IMR-90 (cell line): ENCODE measurements at regions of chr9 and their contacts with region 1.

Region 1: GRCh38 chr9:31188496-31188895 is 1195.9 kb upstream of the ACO1 start:
- DNase-seq: no peak
- ATAC-seq: no peak
- H3K4me3 ChIP-seq: no peak overlapping the region
- H3K27ac ChIP-seq: no peak overlapping the region
- H3K4me1 ChIP-seq: no peaks in the 10 kb centered on the region
- H3K27me3 ChIP-seq: no peaks in the 10 kb centered on the region
- CTCF ChIP-seq: no peak
- POLR2A ChIP-seq: no peak
- RAD21 ChIP-seq: no peak

Region 2: DNA sequence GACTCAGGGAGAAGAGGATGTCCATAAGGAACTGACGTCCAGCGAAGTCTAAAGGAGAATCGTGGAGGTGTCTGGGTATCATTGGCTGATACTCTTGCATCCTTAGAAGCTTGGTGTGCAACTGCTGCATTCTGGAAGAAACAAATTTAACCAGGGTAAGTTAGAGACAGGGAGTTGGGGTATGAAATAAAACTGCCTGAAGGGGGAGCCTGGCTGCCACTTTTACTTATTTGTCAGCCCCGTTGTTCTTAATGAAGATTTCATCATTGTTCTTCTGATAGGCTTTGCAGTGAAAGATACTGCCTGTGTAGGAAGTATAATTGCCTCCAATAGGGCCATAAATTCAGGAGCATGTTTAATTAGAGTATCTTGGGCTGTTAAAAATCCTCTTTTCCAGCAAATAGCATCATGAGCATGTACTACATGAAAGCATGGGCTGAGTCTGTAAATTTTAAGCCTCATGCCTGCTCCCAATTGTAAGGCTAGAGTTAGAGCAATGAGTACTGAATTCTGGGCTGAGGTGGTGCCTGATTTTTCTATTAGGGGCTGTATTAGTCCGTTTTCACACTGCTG is 68.5 kb before region 1 on chr9:
- CTCF ChIA-PET with region 1: no interaction called
- POLR2A ChIA-PET with region 1: no interaction called
- dilution Hi-C with region 1: no loop called
- in situ Hi-C with region 1: no loop called
- intact Hi-C with region 1: no loop called
- DNase-seq: no peak
- ATAC-seq: no peak
- H3K4me3 ChIP-seq: no peak overlapping the region
- H3K27ac ChIP-seq: no peak overlapping the region
- H3K4me1 ChIP-seq: no peaks in the 10 kb centered on the region
- H3K27me3 ChIP-seq: no peaks in the 10 kb centered on the region
- CTCF ChIP-seq: peak; percentile 40
- POLR2A ChIP-seq: no peak
- RAD21 ChIP-seq: peak; percentile 51

Region 3: DNA sequence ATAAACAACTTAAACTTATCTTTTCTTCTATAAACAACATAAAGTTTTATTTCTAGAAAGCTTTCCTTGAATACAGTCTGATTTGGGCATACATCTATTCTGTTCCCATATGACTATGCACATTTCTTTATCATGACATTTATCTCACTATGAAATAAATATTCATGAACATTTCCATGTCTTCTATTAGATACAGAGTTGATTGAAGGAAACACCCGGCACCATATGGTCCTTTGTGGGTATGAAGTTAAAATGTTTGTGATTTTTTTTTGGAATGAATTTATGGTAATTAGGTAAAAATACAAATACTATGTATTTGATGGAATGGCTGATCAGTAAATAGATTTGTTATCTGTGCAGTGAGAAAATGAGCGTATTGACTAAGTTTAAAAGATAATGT is 13.8 kb before region 1 on chr9:
- CTCF ChIA-PET with region 1: no interaction called
- POLR2A ChIA-PET with region 1: interaction called, 13 read pairs
- dilution Hi-C with region 1: no loop called
- in situ Hi-C with region 1: no loop called
- intact Hi-C with region 1: no loop called
- DNase-seq: no peak
- ATAC-seq: no peak
- H3K4me3 ChIP-seq: no peak overlapping the region
- H3K27ac ChIP-seq: no peak overlapping the region
- H3K4me1 ChIP-seq: no peaks in the 10 kb centered on the region
- H3K27me3 ChIP-seq: no peaks in the 10 kb centered on the region
- CTCF ChIP-seq: no peak
- POLR2A ChIP-seq: no peak
- RAD21 ChIP-seq: no peak